ENCODE measurements at regions of chr17 and their contacts with region 1.

Region 1: GRCh38 chr17:58006924-58007780 is at the start of gene SRSF1:
- DNase-seq: peak; percentile 98
- H3K4me3 Mint-ChIP-seq: peak within 1 kb of the TSS; percentile 99
- H3K27ac Mint-ChIP-seq: peak within 1 kb of the TSS; percentile 99
- H3K4me1 Mint-ChIP-seq: peaks cover 52% of the 10 kb centered on the region
- H3K27me3 Mint-ChIP-seq: no peaks in the 10 kb centered on the region

Region 2: GRCh38 chr17:57927048-57927723 is 80.0 kb before region 1 on chr17:
- CTCF ChIA-PET with region 1: no interaction called
- DNase-seq: no peak
- H3K4me3 Mint-ChIP-seq: no peak overlapping the region
- H3K27ac Mint-ChIP-seq: no peak overlapping the region
- H3K4me1 Mint-ChIP-seq: peaks cover 13% of the 10 kb centered on the region
- H3K27me3 Mint-ChIP-seq: peaks cover 61% of the 10 kb centered on the region

Region 3: GRCh38 chr17:57980522-57980921 is 26.6 kb before region 1 on chr17:
- CTCF ChIA-PET with region 1: no interaction called
- DNase-seq: no peak
- H3K4me3 Mint-ChIP-seq: no peak overlapping the region
- H3K27ac Mint-ChIP-seq: no peak overlapping the region
- H3K4me1 Mint-ChIP-seq: peaks cover 35% of the 10 kb centered on the region
- H3K27me3 Mint-ChIP-seq: no peaks in the 10 kb centered on the region

Region 4: DNA sequence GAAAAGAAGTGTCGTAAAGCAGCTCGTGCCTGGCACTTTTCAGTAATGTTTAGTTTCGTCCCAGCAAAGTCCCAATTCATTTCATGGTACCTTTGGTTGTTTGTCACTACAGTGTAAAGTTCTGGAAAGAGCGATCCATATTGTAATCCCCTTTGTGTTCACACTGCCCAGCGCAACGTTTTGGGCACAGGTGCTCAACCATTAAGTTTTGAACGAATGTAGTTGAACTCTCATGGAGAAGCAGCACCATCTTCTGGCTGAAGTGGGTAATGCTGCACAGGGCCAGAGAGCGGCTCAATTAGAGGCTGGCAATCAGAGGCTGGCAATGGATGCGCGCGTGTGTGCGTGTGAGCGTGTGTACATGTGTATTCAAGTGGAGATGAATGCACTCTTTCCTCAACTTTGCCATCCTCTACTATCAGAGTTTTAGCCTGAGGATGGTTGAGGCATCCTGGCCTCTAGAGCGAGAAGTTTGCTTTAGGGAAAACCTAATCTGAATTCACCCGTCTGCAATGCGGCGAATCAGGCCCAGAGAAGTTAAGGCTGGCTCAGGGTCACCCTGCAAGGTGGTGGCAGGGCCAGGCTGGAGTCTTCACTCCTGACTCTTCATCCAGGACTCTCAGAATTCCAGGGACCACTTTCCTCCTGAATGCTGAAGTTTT is 105.9 kb after region 1 on chr17:
- CTCF ChIA-PET with region 1: interaction called, 13 read pairs
- DNase-seq: peak; percentile 91
- H3K4me3 Mint-ChIP-seq: no peak overlapping the region
- H3K27ac Mint-ChIP-seq: no peak overlapping the region
- H3K4me1 Mint-ChIP-seq: no peaks in the 10 kb centered on the region
- H3K27me3 Mint-ChIP-seq: peaks cover 48% of the 10 kb centered on the region

Measured in activated naive CD4-positive, alpha-beta T cell treated with anti-CD3 and anti-CD28 coated beads, Interleukin-2, amount 10 ng/mL, durations not matched to agents 7 days and 5 days (primary cell).